IMR-90 (cell line): ENCODE measurements at regions of chr11 and their contacts with region 1.

Region 1: DNA sequence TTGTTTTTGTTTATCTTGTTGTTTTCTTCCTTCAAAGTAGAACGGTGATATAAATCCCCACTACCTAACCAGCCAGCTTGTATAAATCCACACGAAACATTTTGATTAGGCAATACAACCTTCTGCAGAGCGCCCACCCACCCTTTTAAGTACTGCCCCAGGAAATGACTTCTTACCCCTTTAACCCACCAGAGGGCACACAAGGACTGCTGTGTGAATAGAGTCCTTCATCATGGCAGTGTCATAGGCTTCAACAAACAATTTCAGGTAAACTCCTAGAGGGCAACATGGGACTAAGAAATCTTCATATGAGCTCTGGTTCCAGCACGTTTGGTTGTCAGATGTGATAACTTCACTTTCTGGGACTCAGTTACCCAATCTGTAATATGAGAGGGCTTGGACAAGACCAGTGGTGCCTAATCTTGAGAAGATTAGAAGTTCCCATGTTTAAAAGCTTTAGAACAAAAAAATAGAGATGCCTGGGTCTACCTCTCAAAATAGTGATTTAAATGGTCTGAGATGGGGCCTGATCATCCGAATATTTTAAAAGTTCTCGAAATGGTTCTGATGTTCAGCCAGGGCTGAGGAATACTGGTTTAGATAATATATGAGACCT is 56.1 kb downstream of the PIWIL4 start:
- DNase-seq: peak; percentile 78
- ATAC-seq: peak; percentile 98
- H3K4me3 ChIP-seq: no peak overlapping the region
- H3K27ac ChIP-seq: no peak overlapping the region
- H3K4me1 ChIP-seq: no peaks in the 10 kb centered on the region
- H3K27me3 ChIP-seq: no peaks in the 10 kb centered on the region; the same call in 1 of the 2 replicates
- CTCF ChIP-seq: peak; percentile 83
- POLR2A ChIP-seq: peak; percentile 54
- RAD21 ChIP-seq: peak; percentile 97

Region 2: GRCh38 chr11:94767761-94768601 is 144.8 kb after region 1 on chr11 and contains the start of gene AMOTL1:
- CTCF ChIA-PET with region 1: interaction called, 3 read pairs
- POLR2A ChIA-PET with region 1: interaction called, 3 read pairs
- dilution Hi-C with region 1: no loop called
- in situ Hi-C with region 1: no loop called
- intact Hi-C with region 1: loop called (anchors 1 kb)
- DNase-seq: peak; percentile 76
- ATAC-seq: peak; percentile 90
- H3K4me3 ChIP-seq: peak within 1 kb of the TSS; percentile 98
- H3K27ac ChIP-seq: peak within 1 kb of the TSS; percentile 97
- H3K4me1 ChIP-seq: peaks cover 13% of the 10 kb centered on the region
- H3K27me3 ChIP-seq: no peaks in the 10 kb centered on the region
- CTCF ChIP-seq: no peak; the same call in 1 of the 2 replicates
- POLR2A ChIP-seq: no peak
- RAD21 ChIP-seq: peak; percentile 26; the same call in 1 of the 2 replicates
- total RNA-seq, gene AMOTL1: 49.5 and 58.6 TPM in 2 replicates

Region 3: GRCh38 chr11:94876645-94877442 is 253.6 kb after region 1 on chr11:
- CTCF ChIA-PET with region 1: no interaction called
- POLR2A ChIA-PET with region 1: no interaction called
- dilution Hi-C with region 1: no loop called
- in situ Hi-C with region 1: loop called (anchors 5 kb)
- intact Hi-C with region 1: loop called (anchors 1 kb)
- DNase-seq: peak; percentile 98
- ATAC-seq: peak; percentile 97
- H3K4me3 ChIP-seq: no peak overlapping the region
- H3K27ac ChIP-seq: peak overlapping the region; percentile 97
- H3K4me1 ChIP-seq: peaks cover 15% of the 10 kb centered on the region
- H3K27me3 ChIP-seq: no peaks in the 10 kb centered on the region
- CTCF ChIP-seq: peak; percentile 52
- POLR2A ChIP-seq: 0 out of 2 replicates have a peak, but pooled peaks have one; percentile 21
- RAD21 ChIP-seq: peak; percentile 62

Region 4: GRCh38 chr11:94958121-94958696 is 335.0 kb after region 1 on chr11:
- CTCF ChIA-PET with region 1: interaction called, 3 read pairs
- POLR2A ChIA-PET with region 1: no interaction called
- dilution Hi-C with region 1: no loop called
- in situ Hi-C with region 1: no loop called
- intact Hi-C with region 1: loop called (anchors 2 kb)
- DNase-seq: peak; percentile 66
- ATAC-seq: peak; percentile 95
- H3K4me3 ChIP-seq: no peak overlapping the region
- H3K27ac ChIP-seq: peak overlapping the region; percentile 80
- H3K4me1 ChIP-seq: peaks cover 5% of the 10 kb centered on the region
- H3K27me3 ChIP-seq: no peaks in the 10 kb centered on the region
- CTCF ChIP-seq: no peak
- POLR2A ChIP-seq: no peak
- RAD21 ChIP-seq: no peak

Region 5: GRCh38 chr11:95067039-95067840 is 444.0 kb after region 1 on chr11:
- CTCF ChIA-PET with region 1: interaction called, 3 read pairs
- POLR2A ChIA-PET with region 1: no interaction called
- dilution Hi-C with region 1: no loop called
- in situ Hi-C with region 1: no loop called
- intact Hi-C with region 1: loop called (anchors 5 kb)
- DNase-seq: peak; percentile 72
- ATAC-seq: peak; percentile 90
- H3K4me3 ChIP-seq: peak overlapping the region; percentile 91
- H3K27ac ChIP-seq: peak overlapping the region; percentile 85
- H3K4me1 ChIP-seq: no peaks in the 10 kb centered on the region
- H3K27me3 ChIP-seq: no peaks in the 10 kb centered on the region
- CTCF ChIP-seq: peak; percentile 65
- POLR2A ChIP-seq: peak; percentile 57
- RAD21 ChIP-seq: peak; percentile 24; the same call in 1 of the 2 replicates

Region 6: GRCh38 chr11:95764267-95764898 is 1141.2 kb after region 1 on chr11:
- CTCF ChIA-PET with region 1: no interaction called
- POLR2A ChIA-PET with region 1: no interaction called
- dilution Hi-C with region 1: no loop called
- in situ Hi-C with region 1: loop called (anchors 25 kb)
- intact Hi-C with region 1: loop called (anchors 10 kb)
- DNase-seq: peak; percentile 67
- ATAC-seq: peak; percentile 82
- H3K4me3 ChIP-seq: no peak overlapping the region
- H3K27ac ChIP-seq: no peak overlapping the region
- H3K4me1 ChIP-seq: peaks cover 2% of the 10 kb centered on the region; the same call in 1 of the 2 replicates
- H3K27me3 ChIP-seq: peaks cover 9% of the 10 kb centered on the region
- CTCF ChIP-seq: peak; percentile 75
- POLR2A ChIP-seq: no peak
- RAD21 ChIP-seq: peak; percentile 71